MCF 10A (cell line): ENCODE measurements at regions of chr2 and their contacts with region 1.

Region 1: DNA sequence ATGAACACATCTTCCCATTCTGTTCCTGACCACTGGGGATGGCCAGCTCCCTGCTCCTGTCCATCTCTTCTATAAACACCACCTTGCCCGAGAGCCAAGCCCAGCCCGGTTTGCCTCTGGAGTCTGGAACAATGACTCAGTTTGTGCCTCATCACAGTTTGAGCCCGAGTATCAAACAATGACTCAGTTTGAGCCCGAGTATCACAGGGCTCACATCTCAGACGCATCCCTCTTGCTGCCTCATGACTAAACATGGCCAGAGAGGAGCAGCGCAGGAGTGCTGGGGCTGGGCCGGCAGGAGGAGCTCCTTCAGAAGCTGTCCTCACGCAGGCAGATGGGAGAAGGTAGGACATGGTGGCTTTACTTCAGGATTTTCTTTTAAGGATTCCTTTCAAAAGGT is 68.7 kb downstream of the PXDN start:
- DNase-seq: peak; percentile 97
- H3K4me3 Mint-ChIP-seq: peak overlapping the region; percentile 6
- H3K27ac Mint-ChIP-seq: peak overlapping the region; percentile 77
- H3K4me1 Mint-ChIP-seq: peaks cover 12% of the 10 kb centered on the region
- H3K27me3 Mint-ChIP-seq: no peaks in the 10 kb centered on the region
- CTCF ChIP-seq: peak; percentile 62

Region 2: GRCh38 chr2:1455466-1455865 is 220.2 kb before region 1 on chr2:
- CTCF ChIA-PET with region 1: no interaction called
- POLR2A ChIA-PET with region 1: no interaction called
- intact Hi-C with region 1: no loop called
- DNase-seq: peak; percentile 27
- H3K4me3 Mint-ChIP-seq: no peak overlapping the region
- H3K27ac Mint-ChIP-seq: peak overlapping the region; percentile 59
- H3K4me1 Mint-ChIP-seq: peaks cover 17% of the 10 kb centered on the region
- H3K27me3 Mint-ChIP-seq: peaks cover 10% of the 10 kb centered on the region
- CTCF ChIP-seq: no peak

Region 3: DNA sequence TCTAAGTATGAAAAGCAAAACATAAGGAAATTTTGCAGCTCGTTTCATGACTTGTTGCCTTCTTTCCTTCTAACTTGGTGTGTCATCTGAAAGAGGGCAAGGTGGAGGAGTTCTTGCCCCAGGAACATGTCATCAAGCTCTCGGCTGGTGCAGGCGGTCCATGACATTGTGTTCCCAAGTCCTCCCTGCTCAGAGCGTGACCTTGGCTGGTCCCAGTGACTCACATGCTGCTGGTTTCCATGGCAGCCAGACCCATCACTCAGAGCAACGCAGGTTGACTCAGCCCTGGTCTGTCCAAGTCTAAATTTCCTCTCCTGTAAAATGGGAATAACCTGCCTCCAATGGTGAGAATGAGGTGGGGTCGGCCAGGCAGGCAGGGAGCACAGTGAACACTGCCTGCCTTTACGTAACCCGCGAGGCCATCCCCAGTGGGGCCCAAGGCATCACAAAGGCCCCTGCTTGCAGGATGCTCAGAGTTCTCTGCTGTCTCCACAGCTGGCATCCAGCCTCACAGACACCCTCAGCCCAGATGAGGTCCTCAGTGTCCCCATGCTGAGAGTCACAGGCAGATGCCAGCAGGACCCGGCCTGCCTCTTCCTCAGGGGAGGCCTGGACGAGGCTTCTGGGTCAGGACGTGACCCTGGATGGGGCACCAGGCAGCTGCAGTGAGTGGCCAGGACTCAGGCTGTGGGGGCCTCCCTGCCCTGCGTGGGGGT is 118.7 kb before region 1 on chr2:
- CTCF ChIA-PET with region 1: interaction called, 7 read pairs
- POLR2A ChIA-PET with region 1: no interaction called
- intact Hi-C with region 1: loop called (anchors 1 kb)
- DNase-seq: peak; percentile 65
- H3K4me3 Mint-ChIP-seq: no peak overlapping the region
- H3K27ac Mint-ChIP-seq: no peak overlapping the region
- H3K4me1 Mint-ChIP-seq: peaks cover 6% of the 10 kb centered on the region
- H3K27me3 Mint-ChIP-seq: peaks cover 11% of the 10 kb centered on the region
- CTCF ChIP-seq: no peak

Region 4: GRCh38 chr2:1653956-1654695 is 21.5 kb before region 1 on chr2:
- CTCF ChIA-PET with region 1: interaction called, 4 read pairs
- POLR2A ChIA-PET with region 1: interaction called, 4 read pairs
- intact Hi-C with region 1: loop called (anchors 1 kb)
- DNase-seq: peak; percentile 47
- H3K4me3 Mint-ChIP-seq: peak overlapping the region; percentile 36
- H3K27ac Mint-ChIP-seq: no peak overlapping the region
- H3K4me1 Mint-ChIP-seq: peaks cover 18% of the 10 kb centered on the region
- H3K27me3 Mint-ChIP-seq: no peaks in the 10 kb centered on the region
- CTCF ChIP-seq: no peak

Region 5: DNA sequence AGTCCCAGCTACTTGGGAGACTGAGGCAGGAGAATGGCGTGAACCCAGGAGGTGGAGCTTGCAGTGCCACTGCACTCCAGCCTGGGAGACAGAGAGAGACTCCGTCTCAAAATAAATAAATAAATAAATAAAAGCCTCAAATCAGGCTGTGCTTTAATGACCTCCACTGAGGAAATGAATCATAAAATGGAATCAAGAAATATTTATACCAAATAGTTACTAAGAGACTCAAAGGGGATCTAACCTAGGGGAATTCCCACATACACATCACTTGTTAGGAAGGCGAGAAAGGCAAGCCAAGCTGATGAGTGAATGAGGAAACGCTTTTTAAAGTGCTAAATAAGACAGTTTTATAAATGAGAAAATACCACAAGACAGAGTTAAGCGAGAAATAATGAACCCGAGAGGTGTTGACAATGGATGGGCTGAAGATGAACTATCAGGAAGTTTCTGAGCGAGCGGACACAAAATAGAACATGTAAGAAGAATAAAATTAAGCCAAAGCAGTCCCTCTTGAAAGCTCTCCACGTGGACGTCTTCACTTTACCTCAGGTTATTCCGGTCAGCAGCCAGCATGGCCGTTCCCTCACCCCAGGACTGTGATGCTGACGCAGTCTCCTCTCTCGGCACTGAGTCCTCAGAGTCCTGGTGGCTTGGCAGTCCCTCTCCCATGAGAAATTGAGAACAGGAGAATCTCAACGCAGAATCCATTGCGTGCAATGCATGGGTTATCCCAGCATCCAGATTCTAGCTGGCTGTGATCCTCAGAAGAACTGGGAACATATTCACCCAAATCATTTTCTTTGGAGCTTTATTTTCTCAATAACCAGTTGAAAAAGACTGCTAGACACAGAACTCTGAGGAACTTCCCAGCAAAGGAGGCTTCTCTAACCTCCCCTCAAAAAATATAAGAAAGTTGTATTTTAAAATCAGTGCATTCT is 46.3 kb after region 1 on chr2:
- CTCF ChIA-PET with region 1: interaction called, 3 read pairs
- POLR2A ChIA-PET with region 1: interaction called, 5 read pairs
- intact Hi-C with region 1: loop called (anchors 1 kb)
- DNase-seq: peak; percentile 80
- H3K4me3 Mint-ChIP-seq: no peak overlapping the region
- H3K27ac Mint-ChIP-seq: no peak overlapping the region
- H3K4me1 Mint-ChIP-seq: peaks cover 29% of the 10 kb centered on the region
- H3K27me3 Mint-ChIP-seq: no peaks in the 10 kb centered on the region
- CTCF ChIP-seq: no peak

Region 6: GRCh38 chr2:1742681-1743395 is 67.2 kb after region 1 on chr2:
- CTCF ChIA-PET with region 1: interaction called, 34 read pairs
- POLR2A ChIA-PET with region 1: interaction called, 9 read pairs
- intact Hi-C with region 1: loop called (anchors 1 kb)
- DNase-seq: peak; percentile 91
- H3K4me3 Mint-ChIP-seq: peak overlapping the region; percentile 79
- H3K27ac Mint-ChIP-seq: peak overlapping the region; percentile 90
- H3K4me1 Mint-ChIP-seq: peaks cover 7% of the 10 kb centered on the region
- H3K27me3 Mint-ChIP-seq: no peaks in the 10 kb centered on the region
- CTCF ChIP-seq: peak; percentile 66

Region 7: GRCh38 chr2:1769703-1770422 is 94.2 kb after region 1 on chr2:
- CTCF ChIA-PET with region 1: interaction called, 16 read pairs
- POLR2A ChIA-PET with region 1: no interaction called
- intact Hi-C with region 1: no loop called
- DNase-seq: peak; percentile 81
- H3K4me3 Mint-ChIP-seq: no peak overlapping the region
- H3K27ac Mint-ChIP-seq: no peak overlapping the region
- H3K4me1 Mint-ChIP-seq: no peaks in the 10 kb centered on the region
- H3K27me3 Mint-ChIP-seq: no peaks in the 10 kb centered on the region
- CTCF ChIP-seq: peak; percentile 93